AG04450 (cell line): ENCODE measurements at regions of chr3 and their contacts with region 1.

Region 1: DNA sequence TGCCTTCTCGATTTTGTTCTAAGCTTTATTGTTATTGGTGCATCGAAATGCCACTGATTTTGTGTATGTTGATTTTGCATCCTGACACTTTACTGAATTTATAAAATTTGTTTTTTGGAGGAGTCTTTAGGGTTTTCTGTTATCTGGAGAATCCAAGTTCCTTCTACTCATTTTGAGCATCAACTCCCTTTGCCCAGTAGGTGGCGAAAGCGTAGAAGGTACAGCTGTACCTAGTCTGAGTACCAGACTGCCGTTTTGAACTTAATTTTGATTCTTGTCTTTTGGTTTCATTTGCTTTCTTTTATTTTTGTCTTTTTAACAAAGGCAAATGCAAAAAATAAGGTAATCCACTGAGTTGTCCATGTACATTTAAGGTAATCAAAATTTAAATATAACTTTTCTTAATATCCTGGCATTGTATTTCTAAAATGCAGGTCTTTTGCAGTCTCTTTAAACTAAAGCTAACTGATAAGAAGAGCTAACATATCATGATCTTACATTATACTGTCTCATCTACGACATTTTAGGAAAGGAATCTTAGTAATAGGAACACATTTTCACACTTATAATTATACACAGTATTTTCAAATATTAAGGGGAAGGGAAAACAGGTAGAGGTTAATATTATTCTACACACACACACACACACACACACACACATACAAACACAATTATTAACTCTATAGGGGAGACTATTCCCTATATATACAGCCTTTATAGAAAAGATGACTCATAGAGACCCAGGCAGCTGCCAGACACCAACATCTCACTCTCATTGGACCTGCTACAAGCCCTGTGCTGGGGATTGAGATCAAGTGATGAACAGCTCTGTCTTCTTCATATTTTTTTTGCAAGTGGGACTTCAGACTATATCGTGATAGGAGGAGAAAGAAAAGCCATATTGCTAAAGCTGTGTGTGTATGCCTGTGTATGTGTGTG is 71.7 kb downstream of the SYNPR start:
- DNase-seq: no peak
- H3K4me3 ChIP-seq: no peak overlapping the region
- H3K27ac ChIP-seq: no peak overlapping the region
- H3K27me3 ChIP-seq: peaks cover 5% of the 10 kb centered on the region
- CTCF ChIP-seq: peak; percentile 90

Region 2: DNA sequence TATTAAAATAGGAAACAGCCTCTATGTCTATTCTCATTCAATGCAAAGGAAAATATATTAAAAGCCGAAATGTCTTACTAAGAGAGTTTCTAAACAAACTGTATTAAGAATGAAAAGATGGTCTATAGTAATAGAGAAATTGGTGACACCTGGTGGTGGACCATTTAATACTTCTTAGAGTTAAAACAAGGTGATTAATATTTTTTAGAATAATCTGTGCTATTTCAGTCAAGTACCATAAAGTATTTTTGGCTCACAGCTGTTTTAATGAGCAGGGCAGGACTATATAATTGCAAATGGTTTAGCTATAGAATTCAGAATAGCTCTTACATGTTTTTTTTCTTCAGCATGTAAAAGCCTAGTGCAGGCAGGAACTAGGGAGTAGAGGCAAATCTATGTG is 16.0 kb before region 1 on chr3:
- CTCF ChIA-PET with region 1: interaction called, 10 read pairs
- POLR2A ChIA-PET with region 1: no interaction called
- DNase-seq: no peak
- H3K4me3 ChIP-seq: no peak overlapping the region
- H3K27ac ChIP-seq: no peak overlapping the region
- H3K27me3 ChIP-seq: no peaks in the 10 kb centered on the region
- CTCF ChIP-seq: no peak

Region 3: GRCh38 chr3:63370094-63370493 is 20.2 kb after region 1 on chr3:
- CTCF ChIA-PET with region 1: interaction called, 19 read pairs
- POLR2A ChIA-PET with region 1: no interaction called
- DNase-seq: no peak
- H3K4me3 ChIP-seq: no peak overlapping the region
- H3K27ac ChIP-seq: no peak overlapping the region
- H3K27me3 ChIP-seq: no peaks in the 10 kb centered on the region
- CTCF ChIP-seq: no peak

Region 4: DNA sequence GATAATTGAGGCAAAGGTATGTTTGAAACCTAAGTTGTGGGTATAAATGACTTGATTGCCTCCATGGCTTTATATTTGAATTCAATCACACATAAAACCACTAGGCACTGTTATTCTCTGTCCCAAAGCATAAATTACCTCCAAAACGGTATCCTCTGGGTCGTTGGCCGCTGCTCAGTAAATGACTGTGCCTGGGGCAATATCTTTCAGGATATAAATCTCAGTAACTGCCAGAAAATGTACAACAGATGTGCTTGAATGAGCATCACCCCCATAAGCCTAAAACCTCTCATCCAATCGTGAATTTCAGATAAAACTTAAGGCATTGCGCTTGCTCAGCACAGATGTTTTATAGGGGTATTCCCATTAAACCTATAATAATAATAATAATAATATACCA is 450.2 kb after region 1 on chr3:
- CTCF ChIA-PET with region 1: interaction called, 23 read pairs
- POLR2A ChIA-PET with region 1: no interaction called
- DNase-seq: no peak
- H3K4me3 ChIP-seq: no peak overlapping the region
- H3K27ac ChIP-seq: no peak overlapping the region
- H3K27me3 ChIP-seq: no peaks in the 10 kb centered on the region
- CTCF ChIP-seq: no peak

Region 5: GRCh38 chr3:63832395-63832794 is 482.5 kb after region 1 on chr3:
- CTCF ChIA-PET with region 1: interaction called, 12 read pairs
- POLR2A ChIA-PET with region 1: no interaction called
- DNase-seq: no peak
- H3K4me3 ChIP-seq: no peak overlapping the region
- H3K27ac ChIP-seq: no peak overlapping the region
- H3K27me3 ChIP-seq: no peaks in the 10 kb centered on the region
- CTCF ChIP-seq: no peak

Region 6: GRCh38 chr3:64011685-64012084 is 661.8 kb after region 1 on chr3:
- CTCF ChIA-PET with region 1: interaction called, 10 read pairs
- POLR2A ChIA-PET with region 1: no interaction called
- DNase-seq: no peak
- H3K4me3 ChIP-seq: no peak overlapping the region
- H3K27ac ChIP-seq: no peak overlapping the region
- H3K27me3 ChIP-seq: no peaks in the 10 kb centered on the region
- CTCF ChIP-seq: no peak